ENCODE measurements at regions of chr2 and their contacts with region 1.

Region 1: GRCh38 chr2:11753886-11754699 is 7.7 kb downstream of the LPIN1 start:
- DNase-seq: peak; percentile 83
- ATAC-seq: peak; percentile 68
- H3K4me3 Mint-ChIP-seq: peak overlapping the region; percentile 72
- H3K27ac Mint-ChIP-seq: peak overlapping the region; percentile 97
- H3K4me1 Mint-ChIP-seq: peaks cover 92% of the 10 kb centered on the region
- H3K27me3 Mint-ChIP-seq: no peaks in the 10 kb centered on the region

Region 2: GRCh38 chr2:11738589-11739436 is 15.3 kb before region 1 on chr2:
- CTCF ChIA-PET with region 1: interaction called, 18 read pairs
- DNase-seq: peak; percentile 70
- ATAC-seq: peak; percentile 94
- H3K4me3 Mint-ChIP-seq: no peak overlapping the region
- H3K27ac Mint-ChIP-seq: peak overlapping the region; percentile 18
- H3K4me1 Mint-ChIP-seq: peaks cover 18% of the 10 kb centered on the region
- H3K27me3 Mint-ChIP-seq: peaks cover under 1% of the 10 kb centered on the region

Region 3: GRCh38 chr2:11743846-11744553 is 10.1 kb before region 1 on chr2:
- CTCF ChIA-PET with region 1: interaction called, 18 read pairs
- DNase-seq: peak; percentile 87
- ATAC-seq: peak; percentile 66
- H3K4me3 Mint-ChIP-seq: peak overlapping the region; percentile 36
- H3K27ac Mint-ChIP-seq: peak overlapping the region; percentile 74
- H3K4me1 Mint-ChIP-seq: peaks cover 46% of the 10 kb centered on the region
- H3K27me3 Mint-ChIP-seq: no peaks in the 10 kb centered on the region